Left cardiac atrium (tissue), 4 donors: ENCODE measurements at regions of chr10 and their contacts with region 1.

Region 1: DNA sequence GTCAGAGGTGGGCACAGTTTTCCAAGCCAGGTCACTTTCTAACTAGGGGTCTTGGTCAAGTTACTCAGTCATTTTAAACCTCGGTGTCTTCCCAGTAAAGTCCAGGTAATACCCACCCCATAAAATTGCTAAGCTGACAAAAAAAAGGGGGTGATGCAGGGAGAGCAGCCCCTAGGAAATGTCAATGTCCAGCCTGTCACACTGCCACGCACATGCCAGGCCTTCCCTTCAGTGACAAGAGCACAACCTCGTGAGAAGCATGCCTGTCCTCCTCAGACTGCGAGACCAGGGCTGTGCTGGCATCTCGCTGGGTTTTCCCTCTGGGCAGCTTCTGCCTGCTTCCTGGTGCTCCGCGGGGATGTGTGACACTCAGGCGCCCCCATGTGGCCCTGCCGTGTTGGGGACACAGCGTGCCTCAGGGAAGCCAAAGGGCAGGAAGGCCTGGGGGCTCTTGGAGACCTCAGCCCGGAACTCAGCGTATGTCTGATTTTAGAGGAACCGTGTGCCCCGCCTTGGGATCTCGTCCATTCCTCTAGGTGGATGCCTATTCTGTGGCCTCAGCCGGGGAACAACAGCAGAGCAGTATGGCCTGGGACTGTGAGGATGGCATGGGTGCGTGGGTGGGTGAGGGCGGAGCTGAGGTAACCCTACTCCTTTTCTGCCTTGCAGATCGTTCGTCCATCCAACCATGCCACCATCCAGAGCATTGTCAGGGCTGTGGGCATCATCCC is 10.2 kb upstream of the GDF2 start:
- DNase-seq: peak; percentile 87
- ATAC-seq: peak; percentile 93 to 95

Region 2: DNA sequence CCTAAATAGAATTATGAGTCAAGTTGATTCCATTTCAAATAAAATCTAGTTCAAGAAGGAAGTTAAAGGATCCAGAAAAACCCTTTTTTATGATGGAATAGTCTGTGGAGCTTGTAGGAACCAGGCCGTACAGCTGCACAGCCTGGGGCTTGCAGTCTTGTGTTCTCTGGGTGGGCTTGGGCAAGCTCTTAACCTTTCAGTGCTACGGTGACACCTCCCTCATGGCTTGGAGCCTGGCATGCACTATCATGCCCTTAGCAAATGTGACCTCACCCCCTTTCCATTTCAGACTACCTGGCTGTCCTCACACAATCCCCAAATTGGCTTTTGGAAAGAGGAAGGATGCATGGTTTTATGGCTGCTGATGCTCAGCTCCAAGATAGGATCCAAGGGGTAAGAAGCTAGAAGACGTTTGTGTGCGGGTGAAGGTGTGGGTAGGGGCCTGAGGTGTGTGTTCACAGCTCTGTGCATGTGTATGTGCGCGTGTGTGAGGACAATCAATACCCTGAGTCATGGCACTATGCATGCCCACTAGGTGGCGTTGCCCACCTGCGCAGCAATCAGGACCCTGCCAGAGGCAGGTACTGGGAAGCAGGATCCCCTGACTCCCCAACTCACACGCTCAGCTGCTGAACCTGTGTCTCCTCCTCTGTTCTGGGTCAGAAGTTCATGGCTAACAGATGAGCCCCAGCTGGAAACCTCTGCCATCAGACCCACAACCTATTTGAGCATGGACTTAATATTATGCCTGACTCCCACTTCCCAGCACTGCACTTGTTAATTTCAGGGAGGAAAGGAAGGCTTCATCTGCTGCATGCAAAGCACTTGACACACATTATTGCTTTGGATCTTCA is 287.5 kb before region 1 on chr10:
- intact Hi-C with region 1: loop called (anchors 5 kb)
- DNase-seq: peak; percentile 60
- ATAC-seq: peak; percentile 59 to 66

Region 3: DNA sequence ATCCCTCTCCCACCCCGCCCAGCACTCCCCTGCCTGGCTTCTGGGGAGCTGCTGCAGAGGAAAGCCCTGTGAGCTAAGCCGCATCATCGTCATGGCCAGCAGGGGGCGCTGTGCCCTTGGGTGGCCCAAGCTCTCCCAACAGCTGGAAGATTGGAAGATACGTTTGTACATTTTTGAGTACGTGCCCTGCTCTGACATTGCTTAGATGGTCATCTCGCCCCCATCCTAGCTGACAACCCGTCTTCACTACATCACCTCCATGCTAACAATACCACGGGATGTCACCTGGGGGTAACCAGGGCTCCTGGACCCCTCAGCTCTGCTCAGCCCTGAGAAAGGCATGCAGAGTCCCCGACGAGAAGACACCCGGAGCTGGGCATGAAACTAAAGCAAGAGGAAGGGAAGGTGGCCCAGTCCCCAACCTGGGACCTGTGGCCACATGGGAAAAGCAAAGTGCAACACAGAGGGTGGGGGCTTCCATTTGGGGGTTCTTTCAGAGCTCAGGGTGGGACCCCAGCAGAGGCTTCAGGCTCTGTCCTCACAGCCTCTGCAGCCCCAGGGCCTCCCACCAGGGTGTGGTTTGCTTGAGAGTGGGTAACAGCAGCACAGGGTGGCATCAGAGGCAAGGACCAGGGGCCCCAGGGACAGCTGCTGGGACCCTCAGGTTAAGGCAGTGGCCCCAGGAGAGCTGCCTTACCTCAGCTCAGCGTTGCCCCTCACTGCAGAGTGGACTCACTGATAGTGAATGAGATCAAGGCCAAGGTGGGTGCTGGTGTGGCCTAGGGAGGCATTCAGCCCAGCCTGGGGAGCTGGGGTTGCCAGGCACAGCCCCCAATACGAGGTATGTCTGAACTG is 264.2 kb before region 1 on chr10:
- intact Hi-C with region 1: loop called (anchors 2 to 5 kb)
- DNase-seq: peak; percentile 85
- ATAC-seq: peak; percentile 57 to 65

Region 4: DNA sequence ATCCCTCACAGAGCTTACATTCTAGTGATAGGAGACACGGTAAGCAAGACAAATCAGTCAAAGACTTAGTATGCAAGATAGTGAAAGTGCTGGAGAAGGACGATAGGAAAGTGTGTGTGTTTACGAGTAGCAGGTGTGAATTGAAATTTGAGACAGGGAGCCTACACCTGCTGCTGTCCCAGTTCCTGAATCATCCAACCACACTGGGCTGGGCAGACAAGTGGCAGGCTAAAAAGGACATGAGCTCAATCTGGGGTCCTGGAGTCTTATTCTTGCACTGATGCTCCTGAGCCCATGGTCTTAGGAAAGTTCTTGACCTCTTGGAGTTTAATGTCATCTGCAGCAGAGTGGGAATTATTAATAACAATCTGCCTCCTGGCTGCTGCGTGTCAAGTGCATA is 52.3 kb after region 1 on chr10:
- intact Hi-C with region 1: no loop called
- DNase-seq: no peak
- ATAC-seq: no peak